Activated CD8-positive, alpha-beta T cell treated with anti-CD3 and anti-CD28 coated beads for 36 hours (primary cell): ENCODE measurements at regions of chr6 and their contacts with region 1.

Region 1: GRCh38 chr6:45741437-45742171 is 274.1 kb downstream of the CLIC5 start:
- DNase-seq: peak; percentile 40
- ATAC-seq: peak; percentile 60
- H3K4me3 Mint-ChIP-seq: no peak overlapping the region
- H3K27ac Mint-ChIP-seq: peak overlapping the region; percentile 45
- H3K4me1 Mint-ChIP-seq: peaks cover 38% of the 10 kb centered on the region
- H3K27me3 Mint-ChIP-seq: no peaks in the 10 kb centered on the region
- CTCF ChIP-seq: no peak

Region 2: DNA sequence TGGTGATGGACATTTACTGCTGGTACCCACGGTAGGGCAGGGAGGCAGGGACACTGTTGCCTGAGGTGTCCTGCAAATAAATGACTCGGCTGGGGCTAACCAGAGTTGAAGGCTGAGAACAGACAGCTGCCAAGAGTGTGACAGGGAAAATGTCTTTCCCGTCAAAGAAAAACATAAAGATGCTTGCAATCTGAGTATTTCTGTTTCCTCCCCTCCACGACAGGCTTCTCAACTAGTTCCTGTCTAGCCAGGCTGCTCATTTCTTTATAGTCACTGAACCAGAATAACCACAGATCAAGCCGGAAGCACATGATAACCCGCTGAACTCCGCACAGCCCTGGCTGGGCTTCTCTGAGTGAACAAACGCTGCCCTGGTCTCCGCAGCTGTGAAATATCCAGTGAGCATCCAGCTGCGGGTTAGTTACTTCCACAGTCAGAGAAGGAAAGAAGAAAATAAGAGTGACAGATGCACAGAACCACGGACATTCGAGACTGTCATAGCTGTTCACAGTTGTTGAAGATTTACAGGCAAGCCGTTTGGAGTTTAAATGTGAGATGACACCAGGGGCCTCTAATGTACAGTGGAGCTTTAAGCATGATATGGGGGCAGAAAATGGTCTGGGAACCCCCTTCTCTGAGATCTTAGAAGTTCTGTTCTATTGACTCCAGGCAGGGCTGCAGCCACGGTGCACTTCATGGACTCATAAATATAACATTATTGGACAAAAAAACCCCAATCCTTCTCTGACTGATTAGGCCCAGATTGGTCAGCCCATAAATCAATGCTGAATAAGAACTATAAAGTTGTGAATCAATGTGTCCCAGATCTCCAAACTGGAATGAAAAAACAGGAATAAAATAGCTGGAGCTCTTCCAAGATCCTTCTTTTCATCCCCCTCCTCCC is 64.0 kb before region 1 on chr6:
- CTCF ChIA-PET with region 1: no interaction called
- POLR2A ChIA-PET with region 1: no interaction called
- intact Hi-C with region 1: no loop called
- DNase-seq: peak; percentile 74
- ATAC-seq: peak; percentile 84
- H3K4me3 Mint-ChIP-seq: peak overlapping the region; percentile 45
- H3K27ac Mint-ChIP-seq: peak overlapping the region; percentile 77
- H3K4me1 Mint-ChIP-seq: peaks cover 38% of the 10 kb centered on the region
- H3K27me3 Mint-ChIP-seq: no peaks in the 10 kb centered on the region
- CTCF ChIP-seq: no peak

Region 3: DNA sequence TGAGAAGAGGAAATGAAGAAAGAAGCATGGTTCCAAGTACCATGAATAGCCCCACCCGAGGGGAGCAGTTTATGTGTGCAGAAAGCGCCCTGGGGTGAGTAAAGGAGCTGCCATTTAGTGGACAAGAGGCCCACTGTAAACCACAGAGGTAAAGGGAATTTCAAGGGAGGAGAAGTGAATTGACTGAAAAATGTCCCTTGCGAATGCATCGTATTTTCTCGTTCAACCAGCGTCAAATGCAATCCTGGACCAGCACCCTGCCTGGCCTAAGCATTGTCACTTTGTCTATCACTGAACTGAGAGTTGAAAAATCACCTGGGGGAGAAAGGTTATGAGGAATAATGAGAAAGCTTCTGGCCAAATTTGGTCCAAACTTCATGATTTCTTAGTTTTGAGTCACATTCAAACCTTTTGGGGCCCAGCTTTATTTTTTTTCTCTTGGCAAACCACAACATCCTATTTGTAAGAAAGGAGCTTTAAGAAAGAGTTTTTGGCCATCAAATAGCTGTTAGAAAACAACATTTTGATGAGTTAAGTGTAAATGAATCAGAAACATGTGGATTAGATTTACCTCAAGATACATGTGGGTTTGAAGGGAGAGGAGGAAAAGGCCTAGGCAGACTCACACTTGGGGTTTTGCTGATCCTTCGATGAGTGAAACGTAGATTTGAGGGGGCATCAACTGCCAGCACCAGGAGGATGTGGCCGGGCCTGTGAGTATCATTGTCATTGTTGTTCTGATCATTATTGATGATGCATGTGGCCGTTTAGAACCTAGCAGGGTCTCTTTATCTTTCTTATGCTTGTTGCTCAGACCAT is 60.1 kb after region 1 on chr6:
- CTCF ChIA-PET with region 1: interaction called, 3 read pairs
- POLR2A ChIA-PET with region 1: no interaction called
- intact Hi-C with region 1: loop called (anchors 5 kb)
- DNase-seq: peak; percentile 85
- ATAC-seq: peak; percentile 88
- H3K4me3 Mint-ChIP-seq: no peak overlapping the region
- H3K27ac Mint-ChIP-seq: peak overlapping the region; percentile 66
- H3K4me1 Mint-ChIP-seq: peaks cover 20% of the 10 kb centered on the region
- H3K27me3 Mint-ChIP-seq: peaks cover 7% of the 10 kb centered on the region
- CTCF ChIP-seq: no peak

Region 4: DNA sequence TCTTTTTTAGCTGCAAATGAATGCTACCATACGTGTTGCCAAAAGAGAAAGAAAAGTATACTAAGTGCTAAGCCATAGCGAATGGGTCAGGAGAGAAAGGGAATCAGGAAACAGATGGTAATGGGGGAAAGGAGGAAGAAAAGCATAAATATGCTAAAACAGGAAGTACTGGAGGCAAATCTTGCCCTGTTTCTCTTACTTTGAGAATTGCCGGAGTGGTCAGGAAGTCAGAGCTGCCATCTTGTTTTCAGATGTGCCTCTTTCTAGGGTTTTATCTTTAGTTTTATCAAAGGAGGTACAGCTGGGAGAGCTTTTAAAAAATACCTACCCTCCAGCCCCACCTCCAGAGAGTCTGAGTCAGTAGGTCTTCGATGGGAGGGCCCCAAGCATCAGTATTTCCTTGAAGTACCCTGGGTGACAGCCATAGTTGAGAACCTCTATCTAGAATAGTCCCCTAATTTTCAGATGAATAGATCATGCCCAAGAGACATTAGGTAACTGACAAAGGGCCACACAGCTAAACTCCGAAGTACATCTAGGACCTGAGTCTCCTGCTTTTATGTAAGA is 80.7 kb after region 1 on chr6:
- CTCF ChIA-PET with region 1: no interaction called
- POLR2A ChIA-PET with region 1: no interaction called
- intact Hi-C with region 1: loop called (anchors 5 kb)
- DNase-seq: peak; percentile 66
- ATAC-seq: peak; percentile 93
- H3K4me3 Mint-ChIP-seq: peak overlapping the region; percentile 1
- H3K27ac Mint-ChIP-seq: peak overlapping the region; percentile 73
- H3K4me1 Mint-ChIP-seq: peaks cover 24% of the 10 kb centered on the region
- H3K27me3 Mint-ChIP-seq: peaks cover 7% of the 10 kb centered on the region
- CTCF ChIP-seq: no peak